Naive thymus-derived CD4-positive, alpha-beta T cell (primary cell): ENCODE measurements at regions of chr6 and their contacts with region 1.

Region 1: DNA sequence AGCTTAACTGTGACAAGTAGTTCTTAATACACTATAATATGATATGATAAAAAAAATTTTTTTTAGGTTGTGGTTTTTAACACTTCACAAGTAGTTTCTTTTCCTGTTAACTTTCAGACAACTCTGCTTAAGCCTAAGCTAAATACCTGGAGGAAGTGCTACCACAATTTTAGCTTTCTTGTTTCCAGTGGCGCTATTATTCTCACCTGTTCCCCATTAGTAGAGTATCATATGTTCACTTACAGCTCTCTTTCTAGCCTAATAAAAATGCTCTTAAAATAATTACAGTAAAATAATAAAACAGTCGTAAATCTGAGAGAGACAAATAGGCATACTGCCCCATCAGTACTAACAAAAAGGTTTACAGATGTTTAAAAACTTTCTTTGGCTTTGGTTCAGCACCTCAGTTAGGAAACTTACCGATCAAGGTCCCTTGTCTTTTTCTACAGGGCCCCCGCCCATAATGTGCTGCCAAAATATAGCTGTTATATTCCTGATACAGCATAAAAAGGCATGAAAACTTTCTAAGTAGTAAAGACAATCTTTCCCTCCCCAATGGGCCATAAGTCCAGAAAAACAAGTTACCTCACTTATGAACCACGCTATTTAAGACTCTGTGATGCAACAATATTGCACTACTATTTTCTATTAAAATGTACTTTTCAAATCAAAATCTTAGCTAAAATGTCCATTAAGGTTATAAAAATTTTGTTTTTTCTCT is 57.9 kb downstream of the SESN1 start:
- DNase-seq: peak in 4 of 9 donors; percentile 27 to 35 (median 32)
- ATAC-seq: peak; percentile 89
- H3K4me3 ChIP-seq: no peak overlapping the region
- H3K4me3 Mint-ChIP-seq: peak overlapping the region in 8 of 10 donors; percentile 18 to 74 (median 59)
- H3K27ac ChIP-seq: peak overlapping the region; percentile 25
- H3K27ac Mint-ChIP-seq: peak overlapping the region in 8 of 9 donors; percentile 42 to 86 (median 64)
- H3K4me1 ChIP-seq: peaks cover 8 to 21% of the 10 kb centered on the region in 2 donors
- H3K4me1 Mint-ChIP-seq: peaks cover 6 to 74% (median 49%) of the 10 kb centered on the region in 7 donors
- H3K27me3 ChIP-seq: no peaks in the 10 kb centered on the region
- H3K27me3 Mint-ChIP-seq: peaks cover 0 to 31% (median 0%) of the 10 kb centered on the region in 5 donors

Region 2: GRCh38 chr6:109002882-109003281 is 33.9 kb before region 1 on chr6:
- CTCF ChIA-PET with region 1: no interaction called
- POLR2A ChIA-PET with region 1: no interaction called
- intact Hi-C with region 1: no loop called
- DNase-seq: no peak
- ATAC-seq: no peak
- H3K4me3 ChIP-seq: no peak overlapping the region
- H3K4me3 Mint-ChIP-seq: no peak overlapping the region
- H3K27ac ChIP-seq: no peak overlapping the region
- H3K27ac Mint-ChIP-seq: no peak overlapping the region
- H3K4me1 ChIP-seq: peaks cover 18 to 25% of the 10 kb centered on the region in 2 donors
- H3K4me1 Mint-ChIP-seq: peaks cover 20 to 66% (median 60%) of the 10 kb centered on the region in 7 donors
- H3K27me3 ChIP-seq: no peaks in the 10 kb centered on the region
- H3K27me3 Mint-ChIP-seq: no peaks in the 10 kb centered on the region

Region 3: DNA sequence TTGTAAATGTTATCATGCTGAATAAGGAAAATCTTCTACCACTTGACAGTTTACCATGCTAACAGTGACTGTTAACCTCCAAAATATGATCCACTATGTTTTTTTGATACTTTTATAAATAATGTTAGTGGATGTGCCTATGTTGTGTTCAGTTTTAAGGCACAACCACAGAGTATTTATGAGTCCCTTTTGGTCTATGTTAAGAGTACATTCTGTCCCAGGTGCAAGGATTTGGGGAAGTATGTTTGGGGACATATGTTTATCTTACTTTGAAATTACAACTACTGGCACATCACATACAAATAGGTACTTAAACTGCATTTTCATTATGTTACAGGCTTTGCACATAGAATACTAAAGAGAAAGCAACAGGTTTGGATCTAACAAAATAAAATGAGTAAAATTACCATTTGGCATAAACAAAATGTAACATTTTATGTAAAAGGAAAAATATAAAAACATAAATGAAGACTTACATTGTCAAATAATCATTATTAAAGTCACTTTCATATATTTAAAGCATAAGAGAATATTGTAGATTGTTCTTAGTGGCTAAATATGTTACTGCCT is 13.3 kb before region 1 on chr6:
- CTCF ChIA-PET with region 1: no interaction called
- POLR2A ChIA-PET with region 1: interaction called, 7 read pairs
- intact Hi-C with region 1: loop called in 1 of 2 experiments (anchors 1 kb)
- DNase-seq: no peak
- ATAC-seq: no peak
- H3K4me3 ChIP-seq: no peak overlapping the region
- H3K4me3 Mint-ChIP-seq: no peak overlapping the region
- H3K27ac ChIP-seq: no peak overlapping the region
- H3K27ac Mint-ChIP-seq: peak overlapping the region in 2 of 9 donors; percentile 2 to 9
- H3K4me1 ChIP-seq: peaks cover 16 to 47% of the 10 kb centered on the region in 2 donors
- H3K4me1 Mint-ChIP-seq: peaks cover 4 to 69% (median 52%) of the 10 kb centered on the region in 7 donors
- H3K27me3 ChIP-seq: no peaks in the 10 kb centered on the region
- H3K27me3 Mint-ChIP-seq: peaks cover 0 to 4% (median 0%) of the 10 kb centered on the region in 5 donors

Region 4: DNA sequence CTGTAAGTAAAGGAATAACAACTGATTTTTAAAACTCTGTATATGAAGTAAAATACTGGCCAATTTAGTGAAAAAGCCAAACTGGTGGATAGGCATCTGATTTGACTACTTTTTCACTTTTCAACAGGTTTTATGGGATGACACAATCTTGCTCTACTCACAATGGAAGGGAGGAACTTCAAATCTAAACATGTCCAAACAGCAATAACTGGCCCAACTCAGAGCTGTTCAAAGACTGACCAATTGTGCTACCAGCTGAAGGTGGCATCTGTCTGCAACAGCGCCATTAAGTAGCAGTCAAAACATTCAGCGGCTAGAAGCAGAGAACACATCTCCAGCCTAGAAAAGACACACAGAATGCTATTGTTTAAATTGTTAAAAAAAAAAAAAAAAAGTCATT is 13.3 kb after region 1 on chr6:
- CTCF ChIA-PET with region 1: interaction called, 3 read pairs
- POLR2A ChIA-PET with region 1: interaction called, 6 read pairs
- intact Hi-C with region 1: loop called in 1 of 2 experiments (anchors 2 kb)
- DNase-seq: no peak
- ATAC-seq: no peak
- H3K4me3 ChIP-seq: no peak overlapping the region
- H3K4me3 Mint-ChIP-seq: no peak overlapping the region
- H3K27ac ChIP-seq: no peak overlapping the region
- H3K27ac Mint-ChIP-seq: no peak overlapping the region
- H3K4me1 ChIP-seq: peaks cover 0 to 14% of the 10 kb centered on the region in 2 donors
- H3K4me1 Mint-ChIP-seq: peaks cover 4 to 58% (median 28%) of the 10 kb centered on the region in 7 donors
- H3K27me3 ChIP-seq: no peaks in the 10 kb centered on the region
- H3K27me3 Mint-ChIP-seq: peaks cover 0 to 26% (median 0%) of the 10 kb centered on the region in 5 donors

Region 5: GRCh38 chr6:109059571-109060021 is 22.9 kb after region 1 on chr6:
- CTCF ChIA-PET with region 1: interaction called, 5 read pairs
- POLR2A ChIA-PET with region 1: interaction called, 10 read pairs
- intact Hi-C with region 1: no loop called
- DNase-seq: peak in 7 of 9 donors; percentile 24 to 61 (median 40)
- ATAC-seq: peak; percentile 98
- H3K4me3 ChIP-seq: no peak overlapping the region
- H3K4me3 Mint-ChIP-seq: peak overlapping the region; percentile 4 to 68 (median 51)
- H3K27ac ChIP-seq: peak overlapping the region; percentile 33
- H3K27ac Mint-ChIP-seq: peak overlapping the region; percentile 40 to 92 (median 80)
- H3K4me1 ChIP-seq: peaks cover 13 to 19% of the 10 kb centered on the region in 2 donors
- H3K4me1 Mint-ChIP-seq: peaks cover 18 to 75% (median 59%) of the 10 kb centered on the region in 7 donors
- H3K27me3 ChIP-seq: no peaks in the 10 kb centered on the region
- H3K27me3 Mint-ChIP-seq: peaks cover 0 to 8% (median 0%) of the 10 kb centered on the region in 5 donors

Region 6: DNA sequence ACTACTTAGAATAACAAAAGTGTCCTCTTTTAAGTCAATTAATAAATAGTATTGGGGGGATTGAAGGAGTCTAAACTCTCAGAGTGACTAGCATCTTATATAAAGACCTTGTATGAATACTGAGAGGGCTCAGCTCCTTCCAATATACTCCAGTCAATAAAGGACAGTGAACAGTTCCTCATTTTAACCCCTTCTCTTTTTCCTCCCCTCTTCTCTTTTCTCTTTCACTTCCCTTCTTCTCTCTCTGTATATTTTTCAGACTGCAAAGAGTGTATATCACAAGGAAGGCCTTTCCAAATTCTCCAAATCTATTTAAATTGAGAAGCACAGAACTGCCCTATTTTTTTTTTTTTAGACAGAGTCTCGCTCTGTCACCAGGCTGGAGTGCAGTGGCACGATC is 246.0 kb after region 1 on chr6:
- CTCF ChIA-PET with region 1: no interaction called
- POLR2A ChIA-PET with region 1: no interaction called
- intact Hi-C with region 1: no loop called
- DNase-seq: no peak
- ATAC-seq: no peak
- H3K4me3 ChIP-seq: no peak overlapping the region
- H3K4me3 Mint-ChIP-seq: no peak overlapping the region
- H3K27ac ChIP-seq: no peak overlapping the region
- H3K27ac Mint-ChIP-seq: no peak overlapping the region
- H3K4me1 ChIP-seq: no peaks in the 10 kb centered on the region
- H3K4me1 Mint-ChIP-seq: peaks cover 0 to 1% (median 0%) of the 10 kb centered on the region in 7 donors
- H3K27me3 ChIP-seq: no peaks in the 10 kb centered on the region
- H3K27me3 Mint-ChIP-seq: peaks cover 0 to 7% (median 0%) of the 10 kb centered on the region in 5 donors